Activated CD4-positive, alpha-beta T cell treated with anti-CD3 and anti-CD28 coated beads for 36 hours (primary cell): ENCODE measurements at regions of chr6 and their contacts with region 1.

Region 1: DNA sequence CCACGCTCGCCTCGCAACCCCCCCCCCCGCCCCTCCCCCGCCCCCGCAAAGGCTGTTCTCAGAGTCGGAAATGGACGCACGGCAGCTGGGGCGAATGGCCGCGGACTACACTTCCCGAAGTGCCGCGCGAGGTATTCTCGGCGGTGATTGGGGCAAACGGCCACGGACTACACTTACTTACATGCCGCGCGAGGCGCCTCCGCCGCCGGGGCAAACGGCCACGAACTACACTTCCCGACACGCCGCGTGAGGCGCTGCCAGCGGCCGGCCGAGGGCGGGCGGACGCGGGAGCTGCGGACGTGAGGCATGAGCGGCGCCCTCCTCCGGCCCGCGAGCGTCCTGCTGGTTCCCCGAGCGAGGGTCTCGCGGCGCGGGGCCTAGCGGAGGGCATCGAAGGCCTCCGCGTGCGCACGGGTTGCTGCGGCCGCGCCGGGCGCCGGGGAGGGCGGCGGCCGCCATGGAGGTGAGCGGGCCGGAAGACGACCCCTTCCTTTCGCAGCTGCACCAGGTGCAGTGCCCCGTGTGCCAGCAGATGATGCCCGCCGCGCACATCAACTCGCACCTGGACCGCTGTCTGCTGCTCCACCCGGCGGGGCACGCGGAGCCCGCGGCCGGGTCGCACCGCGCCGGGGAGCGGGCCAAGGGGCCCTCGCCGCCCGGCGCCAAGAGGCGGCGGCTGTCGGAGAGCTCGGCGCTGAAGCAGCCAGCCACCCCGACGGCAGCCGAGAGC is at the start of gene WRNIP1:
- DNase-seq: peak; percentile 98
- ATAC-seq: peak; percentile 90
- H3K4me3 Mint-ChIP-seq: peak within 1 kb of the TSS; percentile 94
- H3K27ac Mint-ChIP-seq: peak within 1 kb of the TSS; percentile 98
- H3K4me1 Mint-ChIP-seq: peaks cover 51% of the 10 kb centered on the region
- H3K27me3 Mint-ChIP-seq: no peaks in the 10 kb centered on the region
- total RNA-seq, gene WRNIP1: 41.6 to 42.3 TPM

Region 2: GRCh38 chr6:2749969-2750600 is 15.2 kb before region 1 on chr6:
- CTCF ChIA-PET with region 1: interaction called, 71 read pairs
- POLR2A ChIA-PET with region 1: no interaction called
- intact Hi-C with region 1: loop called in 1 of 2 experiments (anchors 1 kb)
- DNase-seq: peak; percentile 83
- ATAC-seq: peak; percentile 66
- H3K4me3 Mint-ChIP-seq: no peak overlapping the region
- H3K27ac Mint-ChIP-seq: no peak overlapping the region
- H3K4me1 Mint-ChIP-seq: peaks cover 3% of the 10 kb centered on the region
- H3K27me3 Mint-ChIP-seq: peaks cover 8% of the 10 kb centered on the region

Region 3: DNA sequence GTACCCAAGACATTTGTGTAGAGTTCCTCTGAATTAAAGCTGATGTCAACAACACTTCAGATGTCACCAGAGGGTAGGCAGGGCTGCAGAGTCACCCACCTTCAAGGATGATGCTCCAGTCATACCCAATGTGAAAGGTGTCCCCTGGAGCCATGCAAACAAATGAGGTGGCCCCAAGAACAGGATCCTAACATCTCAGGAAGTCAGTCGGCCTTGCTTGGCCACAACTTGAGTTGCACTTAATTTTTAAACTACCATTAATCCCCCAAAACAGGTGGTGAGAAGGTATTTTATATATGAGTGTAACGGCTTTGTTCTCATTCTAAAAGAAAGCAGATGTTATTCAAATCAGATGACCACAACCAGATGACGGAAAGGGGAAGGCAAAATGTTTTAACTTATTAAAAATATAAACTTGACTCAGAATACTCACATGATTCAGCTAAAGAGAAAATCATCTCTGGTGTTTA is 97.4 kb after region 1 on chr6:
- CTCF ChIA-PET with region 1: no interaction called
- POLR2A ChIA-PET with region 1: interaction called, 11 read pairs
- intact Hi-C with region 1: no loop called
- DNase-seq: peak; percentile 77
- ATAC-seq: peak; percentile 54
- H3K4me3 Mint-ChIP-seq: peak overlapping the region; percentile 66
- H3K27ac Mint-ChIP-seq: peak overlapping the region; percentile 99
- H3K4me1 Mint-ChIP-seq: peaks cover 80% of the 10 kb centered on the region
- H3K27me3 Mint-ChIP-seq: no peaks in the 10 kb centered on the region

Region 4: GRCh38 chr6:2988426-2989331 is 223.3 kb after region 1 on chr6:
- CTCF ChIA-PET with region 1: interaction called, 19 read pairs
- POLR2A ChIA-PET with region 1: no interaction called
- intact Hi-C with region 1: loop called (anchors 1 kb)
- DNase-seq: peak; percentile 89
- ATAC-seq: peak; percentile 81
- H3K4me3 Mint-ChIP-seq: peak overlapping the region; percentile 87
- H3K27ac Mint-ChIP-seq: peak overlapping the region; percentile 99
- H3K4me1 Mint-ChIP-seq: peaks cover 20% of the 10 kb centered on the region
- H3K27me3 Mint-ChIP-seq: no peaks in the 10 kb centered on the region

Region 5: DNA sequence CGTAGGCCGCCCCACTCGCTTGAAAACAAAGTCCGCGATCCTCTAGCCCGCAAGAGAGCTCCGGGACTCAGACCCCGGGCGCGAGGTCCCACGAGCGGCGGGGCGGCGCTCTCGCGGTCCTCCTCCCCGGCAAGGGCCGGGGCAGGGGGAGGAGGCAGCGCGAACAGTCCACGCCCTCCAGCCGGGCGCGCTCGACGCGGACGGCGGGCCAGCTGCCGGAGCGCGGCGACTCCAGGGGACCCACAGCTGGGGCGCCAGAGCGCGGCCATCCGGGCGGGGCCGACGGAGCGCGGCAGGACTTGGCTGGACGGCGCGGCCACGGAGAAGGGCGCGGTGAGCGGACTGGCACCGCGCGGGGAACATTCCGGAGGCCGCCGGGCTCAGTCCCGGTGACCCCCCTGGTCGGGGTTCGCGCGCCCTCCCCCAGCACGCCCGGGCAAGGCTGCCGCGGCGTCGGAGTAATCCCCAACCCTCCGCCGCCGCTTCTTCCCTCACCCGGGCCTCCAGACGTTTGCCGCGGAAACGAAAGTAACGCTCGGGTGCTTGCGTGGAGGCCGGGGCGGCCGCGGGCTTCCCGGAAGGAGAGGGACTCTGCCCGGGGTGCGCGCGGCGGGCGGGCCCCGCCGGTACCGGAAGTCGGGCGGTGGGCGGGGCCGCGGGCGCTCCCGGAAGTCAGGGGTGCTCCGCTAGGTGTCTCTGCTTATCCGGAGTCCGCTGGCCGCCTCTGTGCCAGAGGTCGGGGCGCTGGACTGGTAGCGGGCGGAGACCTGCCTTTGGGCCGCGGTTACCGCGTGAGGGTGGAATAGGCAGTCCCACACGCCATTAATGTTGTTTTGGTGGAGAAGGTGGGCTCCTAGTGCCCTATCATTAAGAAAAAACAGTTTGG is 303.2 kb after region 1 on chr6 and contains the start of gene RIPK1:
- CTCF ChIA-PET with region 1: interaction called, 4 read pairs
- POLR2A ChIA-PET with region 1: interaction called, 5 read pairs
- intact Hi-C with region 1: loop called (anchors 1 to 2 kb)
- DNase-seq: peak; percentile 97
- ATAC-seq: peak; percentile 84
- H3K4me3 Mint-ChIP-seq: peak within 1 kb of the TSS; percentile 96
- H3K27ac Mint-ChIP-seq: peak within 1 kb of the TSS; percentile 98
- H3K4me1 Mint-ChIP-seq: peaks cover 61% of the 10 kb centered on the region
- H3K27me3 Mint-ChIP-seq: no peaks in the 10 kb centered on the region
- total RNA-seq, gene RIPK1: 17.4 to 19.3 TPM

Region 6: DNA sequence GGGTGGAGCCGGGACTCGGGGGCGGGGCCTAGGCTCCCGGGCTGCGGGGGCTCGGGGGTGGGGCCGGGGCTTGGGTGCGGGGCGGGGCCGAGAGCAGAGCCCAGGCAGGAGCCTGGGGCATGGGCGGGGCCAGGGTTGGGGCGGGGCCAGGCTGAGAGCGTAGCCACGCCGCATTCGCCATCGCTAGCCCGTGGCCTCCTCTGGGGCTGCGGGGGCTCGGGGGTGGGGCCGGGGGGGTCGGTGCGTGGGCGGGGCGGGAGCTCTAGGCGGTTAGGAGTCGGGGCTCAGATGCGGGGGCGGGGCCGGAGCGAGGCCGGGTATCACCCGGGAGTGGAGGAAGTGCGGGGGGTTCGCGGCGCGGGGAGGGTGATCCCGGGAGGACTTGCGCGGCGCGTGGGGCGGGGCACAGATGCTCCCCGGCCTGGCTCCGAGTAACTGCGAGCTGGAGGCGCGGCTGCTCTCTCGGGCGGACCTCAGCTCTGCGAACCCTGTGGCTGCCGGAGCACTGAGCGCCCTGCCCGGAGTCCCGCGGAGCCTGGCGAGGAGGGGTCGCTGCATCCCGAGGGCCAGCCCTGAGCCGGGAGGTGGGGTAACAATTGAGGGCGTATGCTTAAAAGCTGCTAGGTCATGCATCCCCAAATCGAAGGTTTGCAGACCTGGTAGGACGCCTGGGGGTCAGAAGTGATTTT is 1370.5 kb after region 1 on chr6:
- CTCF ChIA-PET with region 1: no interaction called
- POLR2A ChIA-PET with region 1: no interaction called
- intact Hi-C with region 1: loop called in 1 of 2 experiments (anchors 2 kb)
- DNase-seq: peak; percentile 98
- ATAC-seq: peak; percentile 92
- H3K4me3 Mint-ChIP-seq: peak overlapping the region; percentile 79
- H3K27ac Mint-ChIP-seq: peak overlapping the region; percentile 85
- H3K4me1 Mint-ChIP-seq: peaks cover 46% of the 10 kb centered on the region
- H3K27me3 Mint-ChIP-seq: no peaks in the 10 kb centered on the region